Caco-2 (cell line): ENCODE measurements at regions of chr14 and their contacts with region 1.

Region 1: GRCh38 chr14:22713631-22713950 is 52.9 kb upstream of the OXA1L start:
- DNase-seq: no peak
- H3K4me3 ChIP-seq: peak overlapping the region; percentile 31
- H3K4me3 Mint-ChIP-seq: peak overlapping the region; percentile 77
- H3K27ac Mint-ChIP-seq: peak overlapping the region; percentile 66
- H3K4me1 ChIP-seq: no peaks in the 10 kb centered on the region; the same call in 1 of the 2 replicates
- H3K4me1 Mint-ChIP-seq: no peaks in the 10 kb centered on the region
- H3K27me3 ChIP-seq: no peaks in the 10 kb centered on the region
- H3K27me3 Mint-ChIP-seq: peaks cover 8% of the 10 kb centered on the region
- CTCF ChIP-seq: no peak

Region 2: GRCh38 chr14:22653012-22653621 is 60.5 kb before region 1 on chr14:
- CTCF ChIA-PET with region 1: interaction called, 7 read pairs
- POLR2A ChIA-PET with region 1: no interaction called
- intact Hi-C with region 1: loop called (anchors 1 kb)
- DNase-seq: peak; percentile 85 to 86
- H3K4me3 ChIP-seq: no peak overlapping the region
- H3K4me3 Mint-ChIP-seq: no peak overlapping the region
- H3K27ac Mint-ChIP-seq: peak overlapping the region; percentile 68
- H3K4me1 ChIP-seq: peaks cover 31% of the 10 kb centered on the region
- H3K4me1 Mint-ChIP-seq: peaks cover 12% of the 10 kb centered on the region
- H3K27me3 ChIP-seq: no peaks in the 10 kb centered on the region
- H3K27me3 Mint-ChIP-seq: no peaks in the 10 kb centered on the region
- CTCF ChIP-seq: peak; percentile 80 to 91